ENCODE measurements at regions of chr11 and their contacts with region 1.

Region 1: GRCh38 chr11:87281496-87281895 is 243.8 kb downstream of the TMEM135 start:
- DNase-seq: peak; percentile 79
- H3K4me3 ChIP-seq: no peak overlapping the region
- H3K27ac ChIP-seq: no peak overlapping the region
- H3K4me1 ChIP-seq: peaks cover 6% of the 10 kb centered on the region; the same call in 1 of the 2 replicates
- H3K27me3 ChIP-seq: no peaks in the 10 kb centered on the region

Region 2: DNA sequence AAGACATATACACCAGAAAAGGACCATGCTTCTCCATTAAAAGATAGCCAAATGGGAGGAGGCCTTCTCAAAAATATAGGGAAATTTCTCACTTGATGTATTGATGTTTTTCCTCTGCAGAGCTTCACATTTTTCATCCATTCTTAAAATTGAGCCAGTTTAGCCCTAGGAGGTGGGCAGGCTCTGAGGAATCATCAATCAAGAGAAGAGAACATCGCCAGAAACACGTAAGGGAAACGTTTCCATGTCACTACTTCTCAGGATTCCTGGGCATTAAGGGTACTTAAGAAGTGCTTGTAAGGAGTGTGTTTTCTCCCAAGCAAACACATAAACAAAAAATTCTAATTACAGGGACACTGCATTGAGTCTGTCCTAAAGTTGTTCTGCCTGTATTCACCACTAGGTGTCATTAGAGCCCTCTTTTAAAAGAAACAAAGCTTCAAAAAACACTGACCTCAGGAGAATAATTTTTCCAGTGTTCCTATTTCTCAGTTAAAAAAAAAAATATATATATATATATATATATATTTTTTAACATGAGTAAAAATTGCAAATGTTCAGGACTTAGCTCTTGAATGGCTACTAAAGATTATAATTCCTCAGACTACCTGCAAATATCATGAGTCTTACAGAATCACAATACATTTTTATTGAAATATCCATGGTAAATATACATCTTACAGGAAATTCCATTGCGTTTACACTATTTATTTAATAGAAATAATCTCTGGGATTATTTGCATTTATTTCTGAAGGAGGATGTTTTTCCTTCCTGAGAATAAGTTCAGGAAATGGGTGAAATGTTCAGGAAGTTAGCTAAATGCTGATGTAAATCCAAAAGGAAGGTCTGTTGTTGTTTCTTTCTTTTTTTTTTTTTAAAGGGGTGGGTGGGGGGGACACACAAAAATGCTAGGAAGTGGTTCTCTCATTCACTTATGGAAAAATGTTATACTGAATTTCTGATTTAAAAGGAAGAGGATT is 342.3 kb before region 1 on chr11:
- in situ Hi-C with region 1: loop called (anchors 10 kb)
- DNase-seq: peak; percentile 77
- H3K4me3 ChIP-seq: no peak overlapping the region
- H3K27ac ChIP-seq: peak overlapping the region; percentile 66
- H3K4me1 ChIP-seq: peaks cover 33% of the 10 kb centered on the region
- H3K27me3 ChIP-seq: no peaks in the 10 kb centered on the region

Region 3: GRCh38 chr11:86990515-86990914 is 291.0 kb before region 1 on chr11:
- in situ Hi-C with region 1: loop called (anchors 10 kb)
- DNase-seq: peak; percentile 63
- H3K4me3 ChIP-seq: no peak overlapping the region
- H3K27ac ChIP-seq: no peak overlapping the region
- H3K4me1 ChIP-seq: peaks cover 15% of the 10 kb centered on the region
- H3K27me3 ChIP-seq: no peaks in the 10 kb centered on the region

Region 4: GRCh38 chr11:87097582-87097981 is 183.9 kb before region 1 on chr11:
- in situ Hi-C with region 1: no loop called
- DNase-seq: peak; percentile 29
- H3K4me3 ChIP-seq: no peak overlapping the region
- H3K27ac ChIP-seq: no peak overlapping the region
- H3K4me1 ChIP-seq: no peaks in the 10 kb centered on the region
- H3K27me3 ChIP-seq: no peaks in the 10 kb centered on the region

Region 5: GRCh38 chr11:87180742-87181141 is 100.8 kb before region 1 on chr11:
- in situ Hi-C with region 1: no loop called
- DNase-seq: peak; percentile 73
- H3K4me3 ChIP-seq: no peak overlapping the region
- H3K27ac ChIP-seq: peak overlapping the region; percentile 14
- H3K4me1 ChIP-seq: peaks cover 5% of the 10 kb centered on the region; the same call in 1 of the 2 replicates
- H3K27me3 ChIP-seq: no peaks in the 10 kb centered on the region